ENCODE measurements at regions of chr9 and their contacts with region 1.

Region 1: DNA sequence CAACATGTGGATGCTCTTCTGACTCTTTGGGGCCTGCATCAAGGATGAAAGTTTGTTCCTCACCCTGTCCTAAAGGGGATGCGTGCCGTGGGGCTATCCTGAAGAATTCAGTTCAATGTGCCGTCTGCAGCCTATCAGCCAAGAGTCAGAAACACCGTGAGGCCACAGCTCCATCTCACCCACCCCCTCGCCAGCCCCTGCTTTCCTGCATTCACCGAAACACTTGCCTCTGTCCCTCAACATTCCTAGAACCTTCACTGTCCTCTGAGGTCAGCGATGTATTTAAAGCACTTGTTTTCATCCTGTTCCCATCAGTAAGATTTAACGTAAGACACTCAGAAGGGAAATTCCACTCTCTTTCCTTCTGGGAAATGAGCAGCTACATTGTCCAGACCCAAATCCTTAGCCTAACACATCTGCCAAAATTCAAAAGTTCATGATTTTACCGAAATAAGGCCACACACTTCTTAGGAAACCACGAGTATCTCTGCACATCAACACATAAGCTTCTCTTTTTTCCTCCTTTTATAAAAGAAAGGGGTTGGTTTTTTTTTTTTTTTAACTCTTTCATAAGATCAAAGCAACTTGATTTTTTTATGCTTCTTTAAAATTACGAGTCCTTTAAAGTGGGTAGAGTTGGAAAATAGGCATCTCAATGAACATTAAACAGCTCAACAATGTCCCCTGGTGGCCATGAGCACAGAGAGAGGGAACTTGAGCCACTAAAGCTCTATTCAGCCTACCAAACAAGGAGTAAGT is 100.7 kb downstream of the SUSD1 start:
- DNase-seq: peak; percentile 93
- H3K4me3 ChIP-seq: no peak overlapping the region
- H3K27ac ChIP-seq: peak overlapping the region; percentile 87
- H3K4me1 ChIP-seq: peaks cover 14% of the 10 kb centered on the region
- H3K27me3 ChIP-seq: no peaks in the 10 kb centered on the region
- CTCF ChIP-seq: peak; percentile 84 to 86
- POLR2A ChIP-seq: no peak

Region 2: GRCh38 chr9:111597817-111598729 is 476.4 kb before region 1 on chr9:
- CTCF ChIA-PET with region 1: interaction called, 8 read pairs
- POLR2A ChIA-PET with region 1: no interaction called
- dilution Hi-C with region 1: no loop called
- intact Hi-C with region 1: loop called (anchors 2 kb)
- DNase-seq: peak; percentile 81
- H3K4me3 ChIP-seq: peak overlapping the region; percentile 72 to 91 (median 90)
- H3K27ac ChIP-seq: peak overlapping the region; percentile 87
- H3K4me1 ChIP-seq: peaks cover 36% of the 10 kb centered on the region
- H3K27me3 ChIP-seq: no peaks in the 10 kb centered on the region
- CTCF ChIP-seq: peak; percentile 68 to 72
- POLR2A ChIP-seq: no peak

Region 3: DNA sequence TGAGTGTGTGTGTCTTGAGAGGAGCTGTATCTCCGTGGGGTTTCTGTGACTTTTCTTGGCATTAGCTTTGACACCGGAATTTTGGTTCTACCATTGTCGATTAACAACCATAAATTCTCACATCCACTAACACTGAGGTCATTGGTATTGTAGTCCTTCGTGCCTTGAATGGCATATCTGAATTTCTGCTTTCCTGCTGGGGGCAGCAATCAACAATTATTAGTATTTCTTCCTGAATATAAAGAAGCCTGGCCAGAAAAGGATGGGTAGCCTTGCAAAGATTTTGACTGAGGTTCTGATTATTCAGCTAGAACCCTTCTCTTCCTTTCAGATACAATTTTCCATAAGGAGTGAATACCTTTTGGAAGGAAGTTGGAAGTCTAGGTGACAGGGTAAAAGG is 246.2 kb before region 1 on chr9:
- CTCF ChIA-PET with region 1: interaction called, 18 read pairs
- POLR2A ChIA-PET with region 1: no interaction called
- dilution Hi-C with region 1: no loop called
- intact Hi-C with region 1: loop called (anchors 1 kb)
- DNase-seq: peak; percentile 37
- H3K4me3 ChIP-seq: no peak overlapping the region
- H3K27ac ChIP-seq: no peak overlapping the region
- H3K4me1 ChIP-seq: no peaks in the 10 kb centered on the region
- H3K27me3 ChIP-seq: no peaks in the 10 kb centered on the region
- CTCF ChIP-seq: no peak
- POLR2A ChIP-seq: no peak

Region 4: GRCh38 chr9:111926421-111926875 is 148.0 kb before region 1 on chr9:
- CTCF ChIA-PET with region 1: interaction called, 30 read pairs
- POLR2A ChIA-PET with region 1: interaction called, 6 read pairs
- dilution Hi-C with region 1: no loop called
- intact Hi-C with region 1: loop called (anchors 1 kb)
- DNase-seq: peak; percentile 95
- H3K4me3 ChIP-seq: no peak overlapping the region
- H3K27ac ChIP-seq: peak overlapping the region; percentile 99
- H3K4me1 ChIP-seq: peaks cover 39% of the 10 kb centered on the region
- H3K27me3 ChIP-seq: no peaks in the 10 kb centered on the region
- CTCF ChIP-seq: no peak
- POLR2A ChIP-seq: no peak

Region 5: DNA sequence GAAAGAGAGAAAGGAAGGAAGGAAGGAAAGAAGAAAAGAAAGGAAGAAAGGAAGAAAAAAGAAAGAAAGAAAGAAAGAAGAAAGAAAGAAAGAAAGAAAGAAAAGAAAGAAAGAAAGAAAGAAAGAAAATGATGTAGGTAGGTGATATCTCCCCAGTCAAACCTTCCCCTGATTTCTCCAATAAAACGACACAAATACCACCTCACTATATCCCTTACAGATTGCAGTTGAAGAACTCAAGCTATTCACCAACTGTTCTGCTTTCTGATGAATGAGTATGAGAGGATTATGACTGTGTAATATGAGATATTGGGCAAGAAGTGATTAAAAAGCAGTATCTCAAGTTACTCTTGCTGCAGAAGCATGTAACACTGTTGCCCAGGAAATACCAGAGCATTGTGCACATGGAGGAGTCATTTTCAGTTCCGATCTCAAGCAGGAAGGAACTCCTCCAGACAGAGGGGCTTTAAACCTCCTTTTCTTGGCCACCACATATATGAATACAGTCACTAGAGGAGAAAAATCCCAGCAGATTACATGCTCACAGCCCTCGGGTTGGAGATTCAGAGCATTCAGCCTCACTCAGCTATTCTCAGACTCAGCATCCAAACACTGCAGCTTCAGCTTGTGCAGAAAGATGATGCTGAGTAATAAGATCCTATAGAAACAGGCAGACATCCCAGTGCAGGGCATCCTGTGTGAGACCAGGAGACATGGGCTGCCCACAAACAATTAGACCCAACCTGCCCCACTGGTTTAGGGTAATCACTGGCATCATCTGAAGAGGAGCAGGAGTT is 116.4 kb before region 1 on chr9:
- CTCF ChIA-PET with region 1: interaction called, 34 read pairs
- POLR2A ChIA-PET with region 1: interaction called, 4 read pairs
- dilution Hi-C with region 1: no loop called
- intact Hi-C with region 1: loop called (anchors 1 kb)
- DNase-seq: peak; percentile 96
- H3K4me3 ChIP-seq: peak overlapping the region in 1 of 3 experiments; percentile 6
- H3K27ac ChIP-seq: peak overlapping the region; percentile 89
- H3K4me1 ChIP-seq: peaks cover 43% of the 10 kb centered on the region
- H3K27me3 ChIP-seq: no peaks in the 10 kb centered on the region
- CTCF ChIP-seq: no peak
- POLR2A ChIP-seq: peak; percentile 79

Region 6: DNA sequence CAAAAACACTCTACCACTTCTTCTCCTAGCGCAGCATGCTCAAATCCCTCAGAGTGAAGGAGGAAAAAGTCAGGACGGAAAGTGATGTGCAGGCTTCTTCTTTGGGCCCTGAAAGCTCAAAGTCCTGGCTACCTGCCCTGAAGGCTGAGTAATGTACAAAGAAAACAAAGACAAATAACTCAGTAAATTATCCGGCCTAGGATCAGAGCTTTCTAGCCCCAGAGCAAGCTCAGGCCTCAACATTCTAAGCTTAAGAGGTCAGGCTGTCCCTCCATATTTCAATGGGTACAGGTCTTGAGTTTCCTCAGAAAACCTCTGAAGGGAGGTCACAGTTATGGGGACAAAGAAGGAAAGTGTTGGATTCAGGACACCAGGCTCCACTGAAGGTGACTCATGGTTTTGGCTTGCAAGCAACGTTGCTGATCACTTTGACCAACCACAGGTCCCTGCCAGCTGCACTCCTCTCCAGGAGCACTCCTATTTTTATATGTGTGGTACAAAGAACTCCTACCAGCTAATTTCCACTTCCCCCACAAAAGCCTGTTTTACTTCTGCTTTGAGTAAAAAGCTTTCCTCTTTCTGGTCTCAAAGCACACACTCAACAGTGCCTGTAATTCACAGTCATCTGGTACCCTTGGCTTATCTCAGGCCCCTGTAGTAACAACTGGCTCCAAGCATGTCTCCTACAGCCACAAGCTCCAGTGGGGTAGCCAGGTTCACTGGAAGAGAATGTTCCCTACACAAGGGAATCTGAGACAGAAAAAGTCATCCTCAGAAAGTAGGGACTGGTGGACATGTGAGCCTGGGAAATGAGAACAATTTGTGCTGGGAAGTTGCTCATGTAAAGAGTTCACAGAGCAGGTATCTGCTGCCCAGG is 62.2 kb before region 1 on chr9:
- CTCF ChIA-PET with region 1: interaction called, 14 read pairs
- POLR2A ChIA-PET with region 1: no interaction called
- dilution Hi-C with region 1: no loop called
- intact Hi-C with region 1: no loop called
- DNase-seq: peak; percentile 94
- H3K4me3 ChIP-seq: no peak overlapping the region
- H3K27ac ChIP-seq: peak overlapping the region; percentile 95
- H3K4me1 ChIP-seq: peaks cover 22% of the 10 kb centered on the region
- H3K27me3 ChIP-seq: no peaks in the 10 kb centered on the region
- CTCF ChIP-seq: no peak
- POLR2A ChIP-seq: peak; percentile 26

Region 7: GRCh38 chr9:112041536-112042243 is 32.7 kb before region 1 on chr9:
- CTCF ChIA-PET with region 1: interaction called, 8 read pairs
- POLR2A ChIA-PET with region 1: no interaction called
- dilution Hi-C with region 1: no loop called
- intact Hi-C with region 1: loop called (anchors 1 kb)
- DNase-seq: peak; percentile 83
- H3K4me3 ChIP-seq: no peak overlapping the region
- H3K27ac ChIP-seq: peak overlapping the region; percentile 83
- H3K4me1 ChIP-seq: peaks cover 30% of the 10 kb centered on the region
- H3K27me3 ChIP-seq: no peaks in the 10 kb centered on the region
- CTCF ChIP-seq: no peak
- POLR2A ChIP-seq: no peak

Measured in endothelial cell of umbilical vein (primary cell).